B cell (primary cell): ENCODE measurements at regions of chr18 and their contacts with region 1.

Region 1: GRCh38 chr18:76709659-76710645 is 112.4 kb upstream of the ZNF236 start:
- DNase-seq: peak; percentile 68
- ATAC-seq: peak; percentile 67
- H3K4me3 ChIP-seq: no peak overlapping the region
- H3K4me3 Mint-ChIP-seq: no peak overlapping the region
- H3K27ac ChIP-seq: no peak overlapping the region
- H3K27ac Mint-ChIP-seq: no peak overlapping the region
- H3K4me1 ChIP-seq: peaks cover 0 to 3% of the 10 kb centered on the region in 2 donors
- H3K4me1 Mint-ChIP-seq: no peaks in the 10 kb centered on the region
- H3K27me3 ChIP-seq: no peaks in the 10 kb centered on the region
- H3K27me3 Mint-ChIP-seq: no peaks in the 10 kb centered on the region
- CTCF ChIP-seq: peak; percentile 97

Region 2: DNA sequence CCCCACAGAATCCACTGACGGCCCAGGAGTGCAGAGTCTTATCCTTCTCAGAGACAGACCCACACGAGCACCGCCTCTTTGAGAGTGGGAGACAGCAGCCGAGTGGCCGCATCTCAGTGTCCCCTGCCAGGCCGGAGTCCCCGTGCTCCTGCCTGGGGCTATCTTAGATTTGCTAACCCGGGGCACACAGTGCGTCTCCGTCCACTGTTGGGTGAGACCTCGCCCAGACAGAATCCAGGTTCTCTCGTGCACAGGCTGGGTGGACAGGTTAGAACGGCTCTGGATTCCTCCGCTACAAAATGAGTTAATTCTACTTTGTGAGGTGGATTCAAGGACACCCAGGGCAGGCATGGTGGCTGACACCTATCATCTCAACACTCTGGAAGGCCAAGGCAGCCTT is 303.2 kb before region 1 on chr18:
- CTCF ChIA-PET with region 1: interaction called, 241 read pairs
- POLR2A ChIA-PET with region 1: no interaction called
- intact Hi-C with region 1: no loop called
- DNase-seq: no peak
- ATAC-seq: no peak
- H3K4me3 ChIP-seq: no peak overlapping the region
- H3K4me3 Mint-ChIP-seq: no peak overlapping the region
- H3K27ac ChIP-seq: no peak overlapping the region
- H3K27ac Mint-ChIP-seq: no peak overlapping the region
- H3K4me1 ChIP-seq: no peaks in the 10 kb centered on the region
- H3K4me1 Mint-ChIP-seq: peaks cover 6% of the 10 kb centered on the region
- H3K27me3 ChIP-seq: no peaks in the 10 kb centered on the region
- H3K27me3 Mint-ChIP-seq: no peaks in the 10 kb centered on the region
- CTCF ChIP-seq: no peak

Region 3: GRCh38 chr18:76565238-76566180 is 144.4 kb before region 1 on chr18:
- CTCF ChIA-PET with region 1: no interaction called
- POLR2A ChIA-PET with region 1: no interaction called
- intact Hi-C with region 1: no loop called
- DNase-seq: no peak
- ATAC-seq: no peak
- H3K4me3 ChIP-seq: peak overlapping the region in 1 of 5 experiments; percentile 47
- H3K4me3 Mint-ChIP-seq: peak overlapping the region; percentile 14
- H3K27ac ChIP-seq: no peak overlapping the region
- H3K27ac Mint-ChIP-seq: no peak overlapping the region
- H3K4me1 ChIP-seq: peaks cover 0 to 3% of the 10 kb centered on the region in 2 donors
- H3K4me1 Mint-ChIP-seq: peaks cover 3% of the 10 kb centered on the region
- H3K27me3 ChIP-seq: peaks cover 0 to 2% (median 0%) of the 10 kb centered on the region in 4 experiments
- H3K27me3 Mint-ChIP-seq: peaks cover 28% of the 10 kb centered on the region
- CTCF ChIP-seq: no peak

Region 4: GRCh38 chr18:76699923-76700322 is 10.0 kb before region 1 on chr18:
- CTCF ChIA-PET with region 1: interaction called, 11 read pairs
- POLR2A ChIA-PET with region 1: no interaction called
- intact Hi-C with region 1: no loop called
- DNase-seq: no peak
- ATAC-seq: no peak
- H3K4me3 ChIP-seq: no peak overlapping the region
- H3K4me3 Mint-ChIP-seq: no peak overlapping the region
- H3K27ac ChIP-seq: no peak overlapping the region
- H3K27ac Mint-ChIP-seq: no peak overlapping the region
- H3K4me1 ChIP-seq: no peaks in the 10 kb centered on the region
- H3K4me1 Mint-ChIP-seq: no peaks in the 10 kb centered on the region
- H3K27me3 ChIP-seq: peaks cover 0 to 3% (median 0%) of the 10 kb centered on the region in 4 experiments
- H3K27me3 Mint-ChIP-seq: peaks cover 22% of the 10 kb centered on the region
- CTCF ChIP-seq: no peak

Region 5: DNA sequence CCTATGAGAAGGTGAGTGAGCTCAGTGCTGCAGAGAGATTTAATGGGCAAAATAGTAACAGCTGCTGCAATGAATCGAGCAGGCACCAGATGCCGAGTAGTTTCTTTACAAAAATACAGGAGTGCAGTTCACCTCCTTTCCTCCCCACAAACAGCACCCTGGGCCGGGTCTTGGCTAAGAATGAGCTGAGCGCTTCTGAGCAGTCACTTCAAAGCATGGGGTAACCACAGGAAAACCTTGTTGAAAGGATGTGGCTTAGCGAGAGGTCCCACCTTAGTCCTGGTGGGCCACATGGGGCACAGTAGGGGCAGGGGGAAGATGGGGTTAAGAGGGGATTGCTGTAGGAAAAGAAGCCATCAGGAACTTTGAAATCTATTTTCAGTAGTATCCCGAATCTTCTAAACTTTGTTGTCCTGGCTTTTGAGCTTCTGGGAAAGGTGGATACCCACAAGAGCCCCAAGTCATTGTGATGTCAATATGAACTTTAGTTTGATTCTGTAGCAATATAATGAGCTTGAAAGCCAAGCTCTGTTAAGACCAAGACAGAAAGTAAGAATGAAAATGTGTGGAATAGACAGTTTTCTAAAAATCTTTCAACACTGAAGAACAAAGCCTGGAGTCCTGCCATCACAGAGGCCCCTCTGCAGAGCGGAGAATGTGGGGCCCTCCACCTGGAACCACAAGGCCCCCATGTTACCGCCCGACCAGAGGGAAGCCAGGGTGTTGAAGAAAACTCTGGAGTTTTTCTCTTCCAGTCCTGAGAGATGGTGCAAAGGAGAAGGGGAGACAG is 11.4 kb after region 1 on chr18:
- CTCF ChIA-PET with region 1: interaction called, 15 read pairs
- POLR2A ChIA-PET with region 1: no interaction called
- intact Hi-C with region 1: no loop called
- DNase-seq: no peak
- ATAC-seq: no peak
- H3K4me3 ChIP-seq: no peak overlapping the region
- H3K4me3 Mint-ChIP-seq: no peak overlapping the region
- H3K27ac ChIP-seq: no peak overlapping the region
- H3K27ac Mint-ChIP-seq: no peak overlapping the region
- H3K4me1 ChIP-seq: no peaks in the 10 kb centered on the region
- H3K4me1 Mint-ChIP-seq: no peaks in the 10 kb centered on the region
- H3K27me3 ChIP-seq: no peaks in the 10 kb centered on the region
- H3K27me3 Mint-ChIP-seq: peaks cover 17% of the 10 kb centered on the region
- CTCF ChIP-seq: no peak

Region 6: DNA sequence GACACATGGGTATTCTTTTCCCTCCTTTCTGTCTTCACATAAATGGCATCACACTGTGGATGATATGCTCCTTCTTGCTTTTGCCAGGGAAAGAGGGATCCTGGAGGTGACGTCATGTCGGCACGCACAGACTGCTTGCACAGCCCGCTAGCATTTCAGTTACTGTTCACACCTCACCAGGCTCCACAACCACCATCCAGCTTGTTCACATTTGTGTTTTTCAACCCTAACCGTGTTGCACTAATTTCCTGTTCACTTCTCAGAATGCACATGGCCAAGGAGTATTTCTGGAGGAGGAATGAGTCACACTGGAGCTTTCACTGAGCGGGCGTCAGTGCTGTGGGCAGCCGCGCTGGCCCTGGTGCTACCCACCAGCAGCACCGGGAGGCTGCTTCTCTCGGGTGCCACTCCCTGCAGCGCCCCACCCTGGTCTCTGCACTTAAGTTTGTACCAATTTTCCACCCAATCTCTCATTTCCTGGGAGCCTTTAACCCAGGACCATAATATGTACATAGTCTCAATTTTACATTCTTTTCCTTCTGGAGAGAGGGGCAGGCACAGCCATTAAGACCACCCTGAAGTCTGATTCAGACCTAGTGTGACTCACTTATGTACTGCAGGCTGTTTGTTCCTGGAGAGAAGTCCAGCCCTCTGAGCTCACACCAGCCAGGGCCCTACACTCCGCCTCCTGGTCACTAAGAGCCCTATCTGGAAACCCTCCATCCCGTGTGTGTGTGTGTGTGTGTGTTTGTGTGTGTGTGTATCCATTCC is 357.5 kb after region 1 on chr18:
- CTCF ChIA-PET with region 1: no interaction called
- POLR2A ChIA-PET with region 1: no interaction called
- intact Hi-C with region 1: no loop called
- DNase-seq: peak; percentile 48
- ATAC-seq: peak; percentile 24
- H3K4me3 ChIP-seq: peak overlapping the region in 1 of 5 experiments; percentile 49
- H3K4me3 Mint-ChIP-seq: peak overlapping the region; percentile 82
- H3K27ac ChIP-seq: peak overlapping the region; percentile 77 to 97
- H3K27ac Mint-ChIP-seq: peak overlapping the region; percentile 98
- H3K4me1 ChIP-seq: peaks cover 72 to 84% of the 10 kb centered on the region in 2 donors
- H3K4me1 Mint-ChIP-seq: peaks cover 99% of the 10 kb centered on the region
- H3K27me3 ChIP-seq: no peaks in the 10 kb centered on the region
- H3K27me3 Mint-ChIP-seq: no peaks in the 10 kb centered on the region
- CTCF ChIP-seq: no peak

Region 7: GRCh38 chr18:77098029-77098428 is 388.1 kb after region 1 on chr18:
- CTCF ChIA-PET with region 1: no interaction called
- POLR2A ChIA-PET with region 1: no interaction called
- intact Hi-C with region 1: no loop called
- DNase-seq: no peak
- ATAC-seq: no peak
- H3K4me3 ChIP-seq: no peak overlapping the region
- H3K4me3 Mint-ChIP-seq: no peak overlapping the region
- H3K27ac ChIP-seq: no peak overlapping the region
- H3K27ac Mint-ChIP-seq: no peak overlapping the region
- H3K4me1 ChIP-seq: peaks cover 51 to 56% of the 10 kb centered on the region in 2 donors
- H3K4me1 Mint-ChIP-seq: peaks cover 60% of the 10 kb centered on the region
- H3K27me3 ChIP-seq: no peaks in the 10 kb centered on the region
- H3K27me3 Mint-ChIP-seq: no peaks in the 10 kb centered on the region
- CTCF ChIP-seq: no peak

Region 8: GRCh38 chr18:77223653-77224052 is 513.7 kb after region 1 on chr18:
- CTCF ChIA-PET with region 1: no interaction called
- POLR2A ChIA-PET with region 1: no interaction called
- intact Hi-C with region 1: no loop called
- DNase-seq: no peak
- ATAC-seq: no peak
- H3K4me3 ChIP-seq: no peak overlapping the region
- H3K4me3 Mint-ChIP-seq: no peak overlapping the region
- H3K27ac ChIP-seq: no peak overlapping the region
- H3K27ac Mint-ChIP-seq: no peak overlapping the region
- H3K4me1 ChIP-seq: no peaks in the 10 kb centered on the region
- H3K4me1 Mint-ChIP-seq: no peaks in the 10 kb centered on the region
- H3K27me3 ChIP-seq: peaks cover 0 to 3% (median 3%) of the 10 kb centered on the region in 4 experiments
- H3K27me3 Mint-ChIP-seq: peaks cover 24% of the 10 kb centered on the region
- CTCF ChIP-seq: no peak